Activated CD4-positive, alpha-beta T cell treated with anti-CD3 and anti-CD28 coated beads for 36 hours (primary cell): ENCODE measurements at regions of chr17 and their contacts with region 1.

Region 1: GRCh38 chr17:1724506-1725362 is at the start of gene WDR81:
- DNase-seq: peak; percentile 95
- ATAC-seq: peak; percentile 82
- H3K4me3 Mint-ChIP-seq: peak within 1 kb of the TSS; percentile 65
- H3K27ac Mint-ChIP-seq: peak within 1 kb of the TSS; percentile 73
- H3K4me1 Mint-ChIP-seq: peaks cover 29% of the 10 kb centered on the region
- H3K27me3 Mint-ChIP-seq: no peaks in the 10 kb centered on the region
- total RNA-seq, gene WDR81: 6.9 to 8.6 TPM

Region 2: GRCh38 chr17:1736348-1737281 is 11.9 kb after region 1 on chr17:
- CTCF ChIA-PET with region 1: interaction called, 12 read pairs
- POLR2A ChIA-PET with region 1: no interaction called
- intact Hi-C with region 1: no loop called
- DNase-seq: peak; percentile 89
- ATAC-seq: peak; percentile 91
- H3K4me3 Mint-ChIP-seq: no peak overlapping the region
- H3K27ac Mint-ChIP-seq: peak overlapping the region; percentile 71
- H3K4me1 Mint-ChIP-seq: peaks cover 20% of the 10 kb centered on the region
- H3K27me3 Mint-ChIP-seq: no peaks in the 10 kb centered on the region

Region 3: GRCh38 chr17:1773696-1774181 is 49.0 kb after region 1 on chr17:
- CTCF ChIA-PET with region 1: interaction called, 10 read pairs
- POLR2A ChIA-PET with region 1: no interaction called
- intact Hi-C with region 1: no loop called
- DNase-seq: no peak
- ATAC-seq: no peak
- H3K4me3 Mint-ChIP-seq: no peak overlapping the region
- H3K27ac Mint-ChIP-seq: peak overlapping the region; percentile 42
- H3K4me1 Mint-ChIP-seq: peaks cover 14% of the 10 kb centered on the region
- H3K27me3 Mint-ChIP-seq: no peaks in the 10 kb centered on the region

Region 4: GRCh38 chr17:1847191-1847590 is 122.5 kb after region 1 on chr17:
- CTCF ChIA-PET with region 1: no interaction called
- POLR2A ChIA-PET with region 1: no interaction called
- intact Hi-C with region 1: no loop called
- DNase-seq: no peak
- ATAC-seq: no peak
- H3K4me3 Mint-ChIP-seq: no peak overlapping the region
- H3K27ac Mint-ChIP-seq: no peak overlapping the region
- H3K4me1 Mint-ChIP-seq: peaks cover 6% of the 10 kb centered on the region
- H3K27me3 Mint-ChIP-seq: no peaks in the 10 kb centered on the region

Region 5: DNA sequence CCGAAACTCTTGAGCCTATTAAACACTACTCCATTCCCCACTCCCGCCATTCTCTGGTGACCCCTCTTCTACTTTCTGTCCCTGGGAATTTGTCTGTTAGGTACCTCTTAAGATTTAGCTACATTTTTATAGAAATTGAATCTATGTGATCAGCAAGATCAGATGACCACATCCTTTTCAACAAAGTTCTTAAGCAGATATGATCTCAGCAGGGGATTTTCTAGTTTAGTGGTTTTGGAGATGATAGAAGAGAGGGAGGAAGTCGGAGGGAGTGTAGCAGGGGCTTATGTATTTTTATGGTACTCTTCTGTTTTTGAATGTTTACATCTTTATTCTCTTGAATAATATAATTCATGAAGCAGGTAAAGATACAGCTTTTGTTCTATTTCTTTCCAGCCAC is 145.9 kb after region 1 on chr17:
- CTCF ChIA-PET with region 1: interaction called, 6 read pairs
- POLR2A ChIA-PET with region 1: no interaction called
- intact Hi-C with region 1: loop called (anchors 1 to 5 kb)
- DNase-seq: no peak
- ATAC-seq: peak; percentile 68
- H3K4me3 Mint-ChIP-seq: peak overlapping the region; percentile 42
- H3K27ac Mint-ChIP-seq: peak overlapping the region; percentile 97
- H3K4me1 Mint-ChIP-seq: peaks cover 55% of the 10 kb centered on the region
- H3K27me3 Mint-ChIP-seq: no peaks in the 10 kb centered on the region